ENCODE measurements at regions of chr9 and their contacts with region 1.

Region 1: DNA sequence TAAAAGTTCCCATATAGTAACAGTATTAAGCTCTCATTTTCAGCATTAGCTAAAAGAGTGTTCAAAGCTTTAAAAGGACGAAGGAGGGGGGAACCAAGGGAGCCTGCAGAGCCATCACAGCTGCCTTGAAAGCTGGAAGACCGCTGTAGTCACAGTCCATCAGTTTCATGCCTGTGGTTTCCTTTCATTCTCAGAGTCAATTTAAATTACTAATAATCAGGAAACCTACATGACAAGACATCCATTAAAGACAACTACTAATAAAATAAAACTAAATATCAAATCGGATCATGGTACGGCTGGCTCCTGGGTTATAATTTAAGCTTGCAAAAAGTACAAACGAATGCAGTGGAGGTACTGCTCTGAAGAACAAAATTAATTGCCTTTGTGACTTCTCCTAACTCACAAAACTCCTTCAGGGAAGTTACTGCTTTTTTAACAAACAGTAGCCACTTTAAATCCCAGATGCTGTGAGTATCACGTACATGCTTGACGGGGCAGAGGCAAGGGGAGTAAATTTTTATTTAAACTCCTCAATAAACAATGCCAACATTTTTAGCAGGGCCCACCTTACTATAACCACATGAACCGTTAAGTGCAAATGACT is 213.5 kb downstream of the DENND1A start:
- DNase-seq: no peak
- H3K4me3 ChIP-seq: no peak overlapping the region
- CTCF ChIP-seq: no peak

Region 2: GRCh38 chr9:123642291-123643278 is 73.9 kb before region 1 on chr9:
- in situ Hi-C with region 1: loop called (anchors 5 kb)
- DNase-seq: peak; percentile 37
- H3K4me3 ChIP-seq: no peak overlapping the region
- CTCF ChIP-seq: no peak

Region 3: DNA sequence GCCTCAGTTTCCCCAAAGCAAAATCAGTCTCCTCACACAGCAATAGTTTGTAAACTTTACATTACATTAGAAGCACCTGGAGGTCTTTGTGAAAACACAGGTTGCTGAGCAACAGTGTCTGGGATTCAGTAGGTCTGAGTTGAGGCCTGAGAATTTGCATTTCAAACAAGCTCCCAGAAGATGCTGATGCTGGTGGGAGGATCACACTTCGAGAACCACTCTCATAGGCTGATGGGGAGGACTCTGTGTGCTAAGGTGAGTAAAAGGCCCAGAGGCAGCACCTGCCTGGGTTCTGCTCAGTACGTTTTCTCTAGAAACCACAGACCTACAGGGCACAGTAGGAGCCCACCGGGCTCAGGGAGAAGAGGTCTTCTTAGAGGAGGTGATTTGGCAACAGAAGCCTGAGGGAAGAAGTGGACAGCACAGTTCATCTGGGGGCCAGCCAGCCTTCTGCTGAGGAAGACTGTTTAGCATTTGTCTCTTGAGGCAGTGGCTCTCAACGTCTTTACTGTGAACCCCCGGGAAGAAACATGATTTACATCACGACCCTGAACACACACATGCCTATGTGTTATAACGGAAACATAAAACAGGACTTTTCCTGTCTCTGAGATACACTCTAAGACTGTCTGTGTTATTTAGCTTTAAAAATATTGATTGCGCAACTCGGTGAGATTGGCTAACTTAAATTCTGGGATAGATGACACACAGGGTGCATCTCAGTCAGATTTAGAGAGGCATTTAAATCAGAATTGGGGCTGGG is 238.3 kb after region 1 on chr9:
- in situ Hi-C with region 1: no loop called
- DNase-seq: no peak
- H3K4me3 ChIP-seq: no peak overlapping the region
- CTCF ChIP-seq: no peak